ENCODE measurements at regions of chr22 and their contacts with region 1.

Region 1: GRCh38 chr22:35971456-35972119 is 57.0 kb downstream of the RBFOX2 start:
- DNase-seq: peak in 2 of 5 donors; percentile 38 to 40
- H3K4me3 ChIP-seq: no peak overlapping the region
- H3K27ac ChIP-seq: peak overlapping the region; percentile 24 to 71
- H3K4me1 ChIP-seq: peaks cover 17% of the 10 kb centered on the region
- H3K27me3 ChIP-seq: no peaks in the 10 kb centered on the region
- CTCF ChIP-seq: no peak
- EP300 ChIP-seq: no peak
- POLR2A ChIP-seq: no peak

Region 2: GRCh38 chr22:35997438-35997837 is 25.9 kb after region 1 on chr22:
- intact Hi-C with region 1: no loop called
- DNase-seq: peak in 2 of 5 donors; percentile 30 to 52
- H3K4me3 ChIP-seq: no peak overlapping the region
- H3K27ac ChIP-seq: peak overlapping the region in 1 of 2 donors; percentile 72
- H3K4me1 ChIP-seq: peaks cover 30% of the 10 kb centered on the region
- H3K27me3 ChIP-seq: no peaks in the 10 kb centered on the region
- CTCF ChIP-seq: no peak
- EP300 ChIP-seq: no peak
- POLR2A ChIP-seq: no peak

Region 3: DNA sequence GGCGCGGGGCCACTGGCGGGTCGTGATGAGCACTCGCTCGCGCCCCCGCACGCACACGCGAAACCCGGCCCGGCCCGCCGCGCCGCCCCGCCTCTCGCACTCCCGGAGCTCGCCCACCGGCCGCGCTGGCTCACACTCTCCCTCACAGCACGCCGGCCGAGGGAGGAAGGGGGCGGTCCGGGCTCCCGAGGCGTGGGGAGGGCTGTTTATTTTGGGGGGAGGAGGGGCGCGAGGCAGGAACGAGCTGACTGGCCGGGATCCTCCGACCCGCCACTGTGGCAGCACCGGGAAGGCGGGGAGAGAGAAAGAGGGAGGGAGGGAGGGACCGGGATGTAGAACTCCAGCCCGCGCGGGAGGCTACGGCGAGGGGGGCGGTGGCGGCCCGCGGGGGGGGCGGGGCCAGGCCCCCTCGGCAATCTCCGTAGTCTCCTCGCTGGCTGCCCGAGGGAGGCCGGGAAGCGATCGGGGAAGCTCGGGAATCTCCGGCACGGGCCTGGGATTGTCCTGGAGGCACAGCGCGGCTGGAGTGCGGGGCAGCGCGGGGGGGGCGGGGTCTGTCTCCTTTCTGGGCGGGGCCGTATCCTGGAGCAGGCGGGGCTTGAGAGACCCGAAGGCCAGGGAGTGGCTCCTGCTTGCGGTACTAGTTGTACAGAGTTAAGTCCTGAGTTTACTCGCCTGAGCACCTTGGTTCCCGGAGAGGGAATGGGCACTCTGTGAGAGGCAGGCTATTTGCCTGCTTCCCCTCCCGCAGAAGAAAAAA is 57.2 kb after region 1 on chr22 and contains the start of gene RBFOX2:
- intact Hi-C with region 1: loop called in 3 of 4 experiments (anchors 10 kb)
- DNase-seq: peak; percentile 98 to 99 (median 99)
- H3K4me3 ChIP-seq: peak within 1 kb of the TSS; percentile 66
- H3K27ac ChIP-seq: peak within 1 kb of the TSS; percentile 84 to 93
- H3K4me1 ChIP-seq: peaks cover 8% of the 10 kb centered on the region
- H3K27me3 ChIP-seq: no peaks in the 10 kb centered on the region
- CTCF ChIP-seq: no peak
- EP300 ChIP-seq: no peak
- POLR2A ChIP-seq: peak; percentile 54
- total RNA-seq, gene RBFOX2: 71.1 to 137 (median 128) TPM

Measured in ovary (tissue), 10 donors.